Heart left ventricle (tissue), 16 donors: ENCODE measurements at regions of chr5 and their contacts with region 1.

Region 1: GRCh38 chr5:34522599-34523386 is 133.3 kb upstream of the RAI14 start:
- DNase-seq: peak in 4 of 5 donors; percentile 61 to 69 (median 66)
- ATAC-seq: peak; percentile 64 to 83 (median 71)
- H3K4me3 ChIP-seq: no peak overlapping the region
- H3K27ac ChIP-seq: no peak overlapping the region
- H3K4me1 ChIP-seq: peaks cover 0 to 14% (median 2%) of the 10 kb centered on the region in 12 donors
- H3K27me3 ChIP-seq: no peaks in the 10 kb centered on the region
- CTCF ChIP-seq: peak; percentile 67 to 88 (median 74)
- POLR2A ChIP-seq: no peak

Region 2: GRCh38 chr5:34486160-34486848 is 36.5 kb before region 1 on chr5:
- intact Hi-C with region 1: loop called in 3 of 10 experiments (anchors 2 to 5 kb)
- DNase-seq: peak; percentile 65 to 85 (median 76)
- ATAC-seq: peak; percentile 45 to 88 (median 70)
- H3K4me3 ChIP-seq: no peak overlapping the region
- H3K27ac ChIP-seq: peak overlapping the region in 1 of 12 donors; percentile 36
- H3K4me1 ChIP-seq: peaks cover 0 to 11% (median 1%) of the 10 kb centered on the region in 12 donors
- H3K27me3 ChIP-seq: peaks cover 0 to 4% (median 0%) of the 10 kb centered on the region in 9 donors
- CTCF ChIP-seq: peak; percentile 74 to 92 (median 85)
- POLR2A ChIP-seq: no peak